ENCODE measurements at regions of chr20 and their contacts with region 1.

Region 1: DNA sequence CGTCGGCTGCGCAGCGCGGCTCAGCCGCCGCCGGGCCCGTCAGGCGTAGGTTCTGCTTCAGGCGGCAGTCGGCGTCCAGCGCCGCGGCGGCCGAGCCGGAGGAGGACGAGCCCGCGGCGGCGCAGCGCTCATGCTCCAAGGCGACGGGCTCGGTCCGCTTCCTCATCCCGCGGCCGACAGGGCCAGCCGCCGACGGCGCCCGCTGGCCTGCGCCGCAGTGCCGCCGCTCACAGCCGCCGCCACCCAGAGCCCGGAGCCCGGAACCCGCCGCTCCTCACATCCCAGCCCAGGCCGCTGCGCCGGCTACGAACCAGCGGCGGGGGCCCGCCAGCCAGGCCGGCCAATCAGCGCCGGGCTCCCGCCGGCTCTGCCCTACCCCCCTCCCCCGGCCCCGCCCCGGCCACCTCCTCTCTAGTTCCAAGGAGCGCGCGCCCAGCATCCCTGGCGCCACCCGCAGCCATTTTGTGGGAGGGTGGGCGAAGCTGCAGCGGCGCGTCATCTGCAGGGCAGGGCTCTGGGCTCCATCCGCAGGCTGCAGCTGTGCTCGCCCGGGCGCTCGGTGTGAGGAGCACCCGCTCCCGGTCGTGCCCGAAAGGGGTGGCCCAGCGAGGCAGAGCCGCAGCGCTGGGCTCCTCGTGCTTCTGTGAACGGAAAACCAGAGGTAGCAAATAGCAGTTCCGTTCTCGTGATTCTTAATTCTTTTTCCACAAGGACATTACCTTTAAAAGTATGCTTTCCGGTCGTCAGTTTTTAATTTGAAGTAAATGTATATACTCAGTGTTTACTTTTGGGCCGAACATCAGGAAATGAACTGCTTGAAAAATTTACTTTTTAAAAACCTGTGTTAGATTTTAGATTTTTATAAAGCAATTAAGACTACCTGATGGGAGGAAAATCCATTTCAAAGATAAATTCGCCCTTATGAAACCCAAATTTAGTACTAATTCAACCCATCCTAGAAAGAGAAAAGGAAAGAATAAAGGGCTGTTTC is at the start of gene ABHD12:
- DNase-seq: peak; percentile 91 to 95 (median 92)
- H3K4me3 ChIP-seq: peak within 1 kb of the TSS; percentile 57 to 83
- H3K4me3 Mint-ChIP-seq: peak within 1 kb of the TSS; percentile 86 to 91 (median 89)
- H3K27ac ChIP-seq: peak within 1 kb of the TSS; percentile 61
- H3K27ac Mint-ChIP-seq: peak within 1 kb of the TSS; percentile 73 to 94 (median 88)
- H3K4me1 ChIP-seq: peaks cover 15% of the 10 kb centered on the region
- H3K4me1 Mint-ChIP-seq: peaks cover 12 to 25% (median 14%) of the 10 kb centered on the region in 4 donors
- H3K27me3 ChIP-seq: no peaks in the 10 kb centered on the region
- H3K27me3 Mint-ChIP-seq: no peaks in the 10 kb centered on the region
- total RNA-seq, gene ABHD12: 30.1 to 30.9 TPM

Region 2: DNA sequence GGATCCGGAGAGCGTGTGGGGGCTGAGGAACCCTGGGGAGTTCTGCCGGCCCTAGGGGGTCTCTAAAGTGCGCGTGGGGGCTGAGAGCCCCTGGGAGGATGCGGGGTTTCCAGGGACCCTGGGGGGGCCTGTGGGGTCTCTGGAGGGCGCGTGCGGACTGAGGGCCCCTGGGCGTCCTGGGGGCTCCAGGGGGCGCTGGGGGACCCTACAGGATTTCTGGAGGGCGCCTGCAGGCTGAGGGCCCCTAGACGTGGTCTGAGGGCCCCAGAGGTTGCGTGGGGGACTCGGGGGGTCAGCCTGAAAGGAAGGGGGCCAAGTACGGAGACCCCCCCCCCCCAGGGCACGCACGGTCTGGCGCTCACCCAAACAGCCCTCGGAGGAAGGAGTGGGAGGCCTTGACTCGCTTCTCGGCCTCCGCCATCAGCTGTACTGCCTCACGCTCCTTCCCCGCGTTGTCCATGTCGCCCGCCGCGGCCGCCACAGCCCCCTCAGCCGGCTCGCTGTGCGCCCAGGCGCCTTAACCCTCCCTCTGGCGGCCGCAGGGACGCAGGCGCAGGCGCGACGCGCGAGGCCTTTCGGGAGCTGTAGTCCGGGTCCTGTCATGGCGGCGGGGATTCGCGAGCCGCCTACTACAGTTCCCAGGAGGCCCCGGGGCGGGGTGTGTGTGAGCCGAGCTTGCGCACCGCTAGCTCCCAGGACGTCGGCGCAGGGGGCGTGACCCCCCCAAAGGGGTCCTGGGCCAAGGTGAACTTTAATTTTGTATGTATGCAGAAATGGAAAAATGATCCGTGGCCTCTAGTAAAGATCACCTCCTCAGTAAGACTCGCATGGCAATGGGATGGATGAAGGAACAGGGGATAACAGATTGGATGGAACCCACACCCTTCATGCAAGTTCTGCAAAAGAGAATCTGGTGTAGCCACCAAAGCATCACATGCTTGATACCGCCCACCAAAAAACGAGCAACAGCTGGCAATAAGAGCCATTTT is 1969.6 kb before region 1 on chr20 and contains the start of gene NAPB:
- CTCF ChIA-PET with region 1: no interaction called
- POLR2A ChIA-PET with region 1: no interaction called
- intact Hi-C with region 1: loop called (anchors 5 kb)
- DNase-seq: peak; percentile 90 to 92 (median 91)
- H3K4me3 ChIP-seq: peak within 1 kb of the TSS; percentile 73 to 84
- H3K4me3 Mint-ChIP-seq: peak within 1 kb of the TSS; percentile 83 to 91 (median 87)
- H3K27ac ChIP-seq: peak within 1 kb of the TSS; percentile 72
- H3K27ac Mint-ChIP-seq: peak within 1 kb of the TSS; percentile 84 to 91 (median 89)
- H3K4me1 ChIP-seq: peaks cover 21% of the 10 kb centered on the region
- H3K4me1 Mint-ChIP-seq: peaks cover 16 to 32% (median 26%) of the 10 kb centered on the region in 4 donors
- H3K27me3 ChIP-seq: no peaks in the 10 kb centered on the region
- H3K27me3 Mint-ChIP-seq: peaks cover 5 to 10% of the 10 kb centered on the region in 2 donors
- total RNA-seq, gene NAPB: 13.3 to 14.9 TPM

Region 3: GRCh38 chr20:25090492-25091429 is 300.1 kb before region 1 on chr20:
- CTCF ChIA-PET with region 1: no interaction called
- POLR2A ChIA-PET with region 1: interaction called, 4 read pairs
- intact Hi-C with region 1: loop called (anchors 2 kb)
- DNase-seq: peak; percentile 80 to 87 (median 82)
- H3K4me3 ChIP-seq: peak overlapping the region in 1 of 2 donors; percentile 23
- H3K4me3 Mint-ChIP-seq: peak overlapping the region in 7 of 8 donors; percentile 40 to 87 (median 71)
- H3K27ac ChIP-seq: peak overlapping the region; percentile 30
- H3K27ac Mint-ChIP-seq: peak overlapping the region; percentile 60 to 92 (median 87)
- H3K4me1 ChIP-seq: peaks cover 37% of the 10 kb centered on the region
- H3K4me1 Mint-ChIP-seq: peaks cover 31 to 38% (median 35%) of the 10 kb centered on the region in 4 donors
- H3K27me3 ChIP-seq: peaks cover 3% of the 10 kb centered on the region
- H3K27me3 Mint-ChIP-seq: peaks cover under 1 to 5% of the 10 kb centered on the region in 2 donors

Region 4: DNA sequence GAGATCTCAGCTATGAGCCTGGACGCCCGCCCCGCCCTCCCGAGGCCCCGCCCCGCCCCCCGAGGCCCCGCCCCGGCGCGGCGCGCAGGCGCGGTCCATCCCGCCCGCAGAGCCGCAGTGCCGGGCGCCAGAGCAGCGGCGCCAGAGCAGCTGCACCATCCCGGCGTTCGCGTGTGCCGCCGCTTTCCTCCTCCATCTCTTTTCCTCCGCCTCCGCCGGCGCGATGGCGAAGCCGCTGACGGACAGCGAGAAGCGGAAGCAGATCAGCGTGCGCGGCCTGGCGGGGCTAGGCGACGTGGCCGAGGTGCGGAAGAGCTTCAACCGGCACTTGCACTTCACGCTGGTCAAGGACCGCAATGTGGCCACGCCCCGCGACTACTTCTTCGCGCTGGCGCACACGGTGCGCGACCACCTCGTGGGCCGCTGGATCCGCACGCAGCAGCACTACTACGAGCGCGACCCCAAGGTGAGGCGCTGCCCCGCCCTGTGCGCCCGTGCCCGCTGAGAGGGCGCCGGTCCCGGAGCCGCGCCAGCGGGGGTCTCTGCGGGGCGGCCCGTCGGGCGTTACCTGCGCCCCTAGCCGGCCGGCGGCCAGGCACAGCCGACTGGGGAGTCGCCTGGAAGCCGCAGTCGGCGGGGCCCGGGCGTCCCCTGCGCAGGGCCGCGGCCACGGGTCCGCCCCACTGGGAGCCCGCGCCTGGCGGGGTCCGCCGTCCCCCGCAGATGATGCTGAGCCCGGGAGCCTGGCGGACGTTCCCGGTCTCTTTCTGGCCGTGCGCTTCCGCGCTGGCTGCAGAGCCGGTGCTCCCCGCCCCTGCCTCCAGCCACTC is 142.7 kb before region 1 on chr20 and contains the start of gene PYGB:
- CTCF ChIA-PET with region 1: no interaction called
- POLR2A ChIA-PET with region 1: interaction called, 3 read pairs
- intact Hi-C with region 1: loop called (anchors 1 kb)
- DNase-seq: peak; percentile 63 to 80 (median 72)
- H3K4me3 ChIP-seq: peak within 1 kb of the TSS; percentile 65 to 94
- H3K4me3 Mint-ChIP-seq: peak within 1 kb of the TSS; percentile 94 to 97 (median 95)
- H3K27ac ChIP-seq: peak within 1 kb of the TSS; percentile 59
- H3K27ac Mint-ChIP-seq: peak within 1 kb of the TSS; percentile 69 to 94 (median 92)
- H3K4me1 ChIP-seq: peaks cover 30% of the 10 kb centered on the region
- H3K4me1 Mint-ChIP-seq: peaks cover 25 to 55% (median 38%) of the 10 kb centered on the region in 4 donors
- H3K27me3 ChIP-seq: no peaks in the 10 kb centered on the region
- H3K27me3 Mint-ChIP-seq: peaks cover 0 to 2% of the 10 kb centered on the region in 2 donors
- total RNA-seq, gene PYGB: 34.0 to 35.6 TPM

Region 5: DNA sequence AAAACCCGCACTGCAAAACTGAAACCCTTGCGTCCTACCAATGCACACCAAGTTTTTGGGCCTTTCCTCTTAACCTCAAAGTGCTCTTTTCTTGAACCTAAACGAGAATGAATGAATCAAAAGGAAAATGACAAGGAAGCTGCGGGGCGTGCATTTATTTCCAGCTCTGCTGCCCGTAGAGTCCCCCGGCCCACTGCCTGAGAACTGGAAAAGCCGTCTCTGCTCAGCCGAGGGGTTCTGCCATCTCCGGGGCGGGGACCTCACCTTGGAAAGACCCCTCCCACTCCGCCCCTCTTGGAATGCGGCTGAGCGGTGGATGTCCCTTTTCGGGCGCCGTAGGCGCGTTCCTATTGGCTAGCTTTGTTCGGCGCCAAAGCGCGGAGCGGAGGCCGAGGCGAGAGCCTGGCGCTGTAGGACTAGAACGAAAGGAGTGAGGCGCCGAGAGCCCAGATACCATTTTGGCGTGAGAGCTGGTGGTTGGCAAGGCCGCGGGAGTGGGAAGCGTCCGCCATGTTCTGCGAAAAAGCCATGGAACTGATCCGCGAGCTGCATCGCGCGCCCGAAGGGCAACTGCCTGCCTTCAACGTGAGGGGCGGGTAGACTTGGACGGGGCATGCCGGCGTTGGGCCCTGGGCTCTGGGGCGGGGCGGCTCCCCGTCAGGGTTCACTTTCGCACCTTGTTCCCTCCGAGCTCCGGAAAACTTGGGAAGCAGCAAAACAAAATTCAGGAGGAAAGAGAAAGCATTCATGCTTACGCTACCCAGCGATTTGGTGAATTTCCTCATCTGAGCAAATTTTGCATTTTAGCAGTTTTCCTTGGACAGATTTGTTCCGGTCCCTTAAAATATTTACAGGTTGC is 16.7 kb after region 1 on chr20 and contains the start of gene GINS1:
- CTCF ChIA-PET with region 1: interaction called, 32 read pairs
- POLR2A ChIA-PET with region 1: interaction called, 16 read pairs
- intact Hi-C with region 1: loop called (anchors 1 kb)
- DNase-seq: peak; percentile 62 to 76 (median 71)
- H3K4me3 ChIP-seq: peak within 1 kb of the TSS; percentile 46 to 81
- H3K4me3 Mint-ChIP-seq: peak within 1 kb of the TSS; percentile 90 to 97 (median 92)
- H3K27ac ChIP-seq: peak within 1 kb of the TSS; percentile 52
- H3K27ac Mint-ChIP-seq: peak within 1 kb of the TSS; percentile 70 to 89 (median 88)
- H3K4me1 ChIP-seq: peaks cover 11% of the 10 kb centered on the region
- H3K4me1 Mint-ChIP-seq: peaks cover 3 to 21% (median 10%) of the 10 kb centered on the region in 4 donors
- H3K27me3 ChIP-seq: no peaks in the 10 kb centered on the region
- H3K27me3 Mint-ChIP-seq: no peaks in the 10 kb centered on the region
- total RNA-seq, gene GINS1: 0.75 to 1.3 TPM

Region 6: DNA sequence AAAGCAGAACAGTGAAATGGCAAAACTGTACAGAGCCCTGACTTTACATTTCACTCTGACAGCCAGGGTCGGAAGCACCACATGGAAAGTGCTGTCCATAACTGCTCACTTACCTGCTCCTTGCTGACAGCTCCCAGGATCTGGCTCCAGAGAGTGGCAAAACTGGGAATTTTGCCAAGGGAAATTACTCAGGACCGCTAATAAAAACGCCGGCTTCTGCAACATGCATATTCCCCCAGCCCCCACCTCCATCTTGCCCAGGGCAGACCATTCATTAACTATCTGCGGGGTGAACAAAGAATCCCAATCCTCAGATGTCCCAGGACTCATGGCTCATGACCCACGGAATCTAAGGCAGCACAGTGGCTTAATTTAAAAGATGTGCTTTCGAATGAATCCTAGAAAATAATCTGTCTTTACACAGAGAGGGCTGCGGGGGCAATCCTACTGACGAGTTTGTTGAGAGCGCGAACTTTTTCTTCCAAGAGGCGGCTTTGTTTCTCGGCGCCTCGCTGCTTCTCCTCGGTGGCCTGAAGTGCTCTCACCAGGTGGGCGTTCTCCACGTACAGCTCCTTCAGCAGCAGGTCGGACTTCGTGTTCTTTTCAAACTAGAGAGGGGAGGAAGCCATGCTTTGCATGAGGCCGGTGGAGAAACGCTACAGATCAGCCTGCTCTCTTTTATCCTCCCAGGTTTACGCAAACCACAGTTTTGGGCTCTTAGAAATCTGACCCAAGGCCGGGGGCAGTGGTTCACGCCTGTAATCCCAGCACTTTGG is 62.4 kb after region 1 on chr20:
- CTCF ChIA-PET with region 1: no interaction called
- POLR2A ChIA-PET with region 1: no interaction called
- intact Hi-C with region 1: no loop called
- DNase-seq: no peak
- H3K4me3 ChIP-seq: no peak overlapping the region
- H3K4me3 Mint-ChIP-seq: no peak overlapping the region
- H3K27ac ChIP-seq: no peak overlapping the region
- H3K27ac Mint-ChIP-seq: no peak overlapping the region
- H3K4me1 ChIP-seq: no peaks in the 10 kb centered on the region
- H3K4me1 Mint-ChIP-seq: no peaks in the 10 kb centered on the region
- H3K27me3 ChIP-seq: no peaks in the 10 kb centered on the region
- H3K27me3 Mint-ChIP-seq: no peaks in the 10 kb centered on the region

Region 7: GRCh38 chr20:25696384-25697131 is 305.7 kb after region 1 on chr20 and contains the start of gene ZNF337:
- CTCF ChIA-PET with region 1: no interaction called
- POLR2A ChIA-PET with region 1: no interaction called
- intact Hi-C with region 1: loop called (anchors 1 kb)
- DNase-seq: peak; percentile 88 to 92 (median 90)
- H3K4me3 ChIP-seq: peak within 1 kb of the TSS; percentile 63 to 79
- H3K4me3 Mint-ChIP-seq: peak within 1 kb of the TSS; percentile 92 to 99 (median 96)
- H3K27ac ChIP-seq: peak within 1 kb of the TSS; percentile 71
- H3K27ac Mint-ChIP-seq: peak within 1 kb of the TSS; percentile 93 to 97 (median 94)
- H3K4me1 ChIP-seq: peaks cover 19% of the 10 kb centered on the region
- H3K4me1 Mint-ChIP-seq: peaks cover 27 to 48% (median 35%) of the 10 kb centered on the region in 4 donors
- H3K27me3 ChIP-seq: no peaks in the 10 kb centered on the region
- H3K27me3 Mint-ChIP-seq: no peaks in the 10 kb centered on the region
- total RNA-seq, gene ZNF337: 34.8 to 36.6 TPM

Measured in CD4-positive, alpha-beta memory T cell (primary cell).